Heart left ventricle (tissue), 16 donors: ENCODE measurements at regions of chr10 and their contacts with region 1.

Region 1: DNA sequence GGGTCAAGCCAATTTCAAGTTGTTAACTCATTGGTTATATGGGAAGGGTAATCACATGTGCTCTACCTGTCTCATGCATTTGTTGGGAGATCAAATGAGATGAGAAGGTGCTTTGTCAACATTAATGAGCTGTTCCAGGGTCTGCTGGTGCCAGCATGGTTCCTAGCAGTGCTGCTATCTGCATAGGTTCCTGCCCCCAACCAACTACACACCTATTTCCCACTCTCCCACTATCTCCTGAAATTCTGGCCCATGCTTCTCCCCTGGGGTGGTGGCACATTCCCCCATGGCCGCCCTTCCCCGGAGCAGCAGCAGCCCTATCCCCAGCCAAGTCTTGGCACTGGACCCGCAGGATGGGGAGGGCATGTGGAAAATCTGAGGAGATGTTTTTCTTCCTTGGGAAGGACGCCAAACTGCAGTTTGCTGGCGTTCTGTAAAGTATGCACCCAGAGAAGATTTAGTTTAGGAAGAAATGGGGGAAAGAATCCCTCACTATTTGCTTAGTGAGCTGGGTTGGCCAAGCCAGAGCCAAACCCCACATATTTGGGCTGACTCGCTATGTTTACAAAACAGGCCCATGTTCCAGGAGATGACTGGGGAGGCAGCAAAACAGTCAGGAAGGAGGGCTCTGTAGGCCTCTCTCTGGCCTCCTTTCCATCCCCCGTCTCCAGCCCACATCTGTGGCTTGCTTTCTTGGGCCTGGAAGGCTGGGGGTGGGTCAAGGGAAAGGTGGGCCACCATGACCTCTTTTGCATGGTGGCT is 42.5 kb downstream of the PPP1R3C start:
- DNase-seq: peak in 4 of 5 donors; percentile 61 to 78 (median 68)
- ATAC-seq: peak; percentile 4 to 52 (median 28)
- H3K4me3 ChIP-seq: no peak overlapping the region
- H3K27ac ChIP-seq: peak overlapping the region; percentile 63 to 96 (median 88)
- H3K4me1 ChIP-seq: peaks cover 6 to 80% (median 62%) of the 10 kb centered on the region in 12 donors
- H3K27me3 ChIP-seq: no peaks in the 10 kb centered on the region
- CTCF ChIP-seq: no peak
- POLR2A ChIP-seq: no peak

Region 2: DNA sequence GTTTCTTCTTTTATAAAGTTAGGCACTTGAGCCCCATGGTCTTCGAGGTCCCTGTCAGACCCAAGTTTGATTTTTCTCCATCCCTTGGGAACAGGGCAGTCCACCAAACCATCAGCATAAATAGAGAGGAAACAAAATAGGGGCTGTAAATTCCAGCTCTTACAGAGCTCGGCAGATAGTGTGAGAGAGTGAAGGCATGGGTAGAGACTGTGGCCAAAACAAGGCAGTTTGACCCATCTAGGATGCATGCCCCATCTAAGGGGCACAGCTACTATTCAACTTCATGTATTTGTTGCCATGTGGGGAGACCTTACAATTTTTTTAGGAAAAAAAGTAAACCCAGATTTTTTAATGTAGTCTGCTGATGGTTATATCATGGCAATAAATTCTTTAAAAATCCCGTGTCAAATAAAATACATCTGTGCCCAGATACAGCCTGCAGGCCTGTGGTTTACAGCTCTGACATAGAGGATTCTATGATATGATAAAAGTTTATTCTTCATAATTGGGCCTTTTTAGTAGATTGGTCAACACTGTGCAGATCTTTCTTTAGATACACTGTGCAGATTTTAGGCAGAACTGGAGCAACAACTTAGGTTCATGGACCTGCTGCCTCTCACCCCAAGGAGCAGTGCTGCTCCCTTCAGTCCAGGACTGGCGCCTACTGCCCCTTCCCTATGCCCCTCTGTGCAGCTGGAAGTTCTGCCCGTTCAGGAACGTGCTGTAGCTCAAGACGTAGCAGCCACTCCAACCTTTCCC is 37.2 kb after region 1 on chr10:
- intact Hi-C with region 1: loop called in 7 of 10 experiments (anchors 2 to 5 kb)
- DNase-seq: no peak
- ATAC-seq: peak in 3 of 4 donors; percentile 27 to 56 (median 44)
- H3K4me3 ChIP-seq: peak overlapping the region in 7 of 12 donors; percentile 63 to 78 (median 71)
- H3K27ac ChIP-seq: peak overlapping the region in 10 of 12 donors; percentile 31 to 89 (median 72)
- H3K4me1 ChIP-seq: peaks cover 0 to 40% (median under 1%) of the 10 kb centered on the region in 12 donors
- H3K27me3 ChIP-seq: peaks cover 0 to 5% (median 0%) of the 10 kb centered on the region in 9 donors
- CTCF ChIP-seq: peak in 2 of 12 donors; percentile 13 to 14
- POLR2A ChIP-seq: no peak